ENCODE measurements at regions of chr9 and their contacts with region 1.

Region 1: GRCh38 chr9:77977210-77977611 is 54.4 kb downstream of the GNAQ start:
- DNase-seq: no peak
- ATAC-seq: peak; percentile 44
- H3K4me3 ChIP-seq: no peak overlapping the region
- H3K27ac ChIP-seq: no peak overlapping the region
- H3K4me1 ChIP-seq: no peaks in the 10 kb centered on the region
- H3K27me3 ChIP-seq: 0 out of 4 replicates have a peak, but pooled peaks cover 0 to 2% of the 10 kb centered on the region in 2 experiments
- CTCF ChIP-seq: peak; percentile 24 to 44 (median 35); a peak in 4 of 6 replicates
- EP300 ChIP-seq: no peak
- POLR2A ChIP-seq: no peak
- RAD21 ChIP-seq: peak; percentile 44

Region 2: GRCh38 chr9:77841739-77842386 is 135.3 kb before region 1 on chr9:
- CTCF ChIA-PET with region 1: interaction called, 29 read pairs
- POLR2A ChIA-PET with region 1: interaction called, 4 read pairs
- RAD21 ChIA-PET with region 1: interaction called, 12 read pairs
- SMC1A ChIA-PET with region 1: interaction called, 17 read pairs
- in situ Hi-C with region 1: no loop called
- intact Hi-C with region 1: no loop called
- DNase-seq: peak; percentile 16
- ATAC-seq: peak; percentile 95
- H3K4me3 ChIP-seq: no peak overlapping the region
- H3K27ac ChIP-seq: no peak overlapping the region
- H3K4me1 ChIP-seq: peaks cover 8% of the 10 kb centered on the region; the same call in 1 of the 2 replicates
- H3K27me3 ChIP-seq: no peaks in the 10 kb centered on the region
- CTCF ChIP-seq: peak; percentile 1 to 16 (median 8); a peak in 2 of 6 replicates
- EP300 ChIP-seq: no peak; a peak in 1 of 4 replicates
- POLR2A ChIP-seq: no peak
- RAD21 ChIP-seq: peak; percentile 48

Region 3: GRCh38 chr9:77926309-77926959 is 50.8 kb before region 1 on chr9:
- CTCF ChIA-PET with region 1: interaction called, 4 read pairs
- POLR2A ChIA-PET with region 1: no interaction called
- RAD21 ChIA-PET with region 1: interaction called, 3 read pairs
- SMC1A ChIA-PET with region 1: interaction called, 5 read pairs
- in situ Hi-C with region 1: no loop called
- intact Hi-C with region 1: loop called (anchors 10 kb)
- DNase-seq: no peak
- ATAC-seq: peak; percentile 31; the same call in 1 of the 3 replicates
- H3K4me3 ChIP-seq: no peak overlapping the region
- H3K27ac ChIP-seq: no peak overlapping the region
- H3K4me1 ChIP-seq: no peaks in the 10 kb centered on the region
- H3K27me3 ChIP-seq: no peaks in the 10 kb centered on the region
- CTCF ChIP-seq: no peak
- EP300 ChIP-seq: no peak
- POLR2A ChIP-seq: no peak
- RAD21 ChIP-seq: no peak

Region 4: GRCh38 chr9:77960356-77961153 is 16.7 kb before region 1 on chr9:
- CTCF ChIA-PET with region 1: interaction called, 10 read pairs
- POLR2A ChIA-PET with region 1: interaction called, 4 read pairs
- RAD21 ChIA-PET with region 1: interaction called, 13 read pairs
- SMC1A ChIA-PET with region 1: interaction called, 9 read pairs
- in situ Hi-C with region 1: no loop called
- intact Hi-C with region 1: no loop called
- DNase-seq: no peak
- ATAC-seq: peak; percentile 15
- H3K4me3 ChIP-seq: no peak overlapping the region
- H3K27ac ChIP-seq: no peak overlapping the region
- H3K4me1 ChIP-seq: no peaks in the 10 kb centered on the region
- H3K27me3 ChIP-seq: peaks cover 0 to 3% of the 10 kb centered on the region in 2 experiments; a peak in 1 of 4 replicates
- CTCF ChIP-seq: no peak
- EP300 ChIP-seq: no peak
- POLR2A ChIP-seq: no peak
- RAD21 ChIP-seq: no peak

Region 5: DNA sequence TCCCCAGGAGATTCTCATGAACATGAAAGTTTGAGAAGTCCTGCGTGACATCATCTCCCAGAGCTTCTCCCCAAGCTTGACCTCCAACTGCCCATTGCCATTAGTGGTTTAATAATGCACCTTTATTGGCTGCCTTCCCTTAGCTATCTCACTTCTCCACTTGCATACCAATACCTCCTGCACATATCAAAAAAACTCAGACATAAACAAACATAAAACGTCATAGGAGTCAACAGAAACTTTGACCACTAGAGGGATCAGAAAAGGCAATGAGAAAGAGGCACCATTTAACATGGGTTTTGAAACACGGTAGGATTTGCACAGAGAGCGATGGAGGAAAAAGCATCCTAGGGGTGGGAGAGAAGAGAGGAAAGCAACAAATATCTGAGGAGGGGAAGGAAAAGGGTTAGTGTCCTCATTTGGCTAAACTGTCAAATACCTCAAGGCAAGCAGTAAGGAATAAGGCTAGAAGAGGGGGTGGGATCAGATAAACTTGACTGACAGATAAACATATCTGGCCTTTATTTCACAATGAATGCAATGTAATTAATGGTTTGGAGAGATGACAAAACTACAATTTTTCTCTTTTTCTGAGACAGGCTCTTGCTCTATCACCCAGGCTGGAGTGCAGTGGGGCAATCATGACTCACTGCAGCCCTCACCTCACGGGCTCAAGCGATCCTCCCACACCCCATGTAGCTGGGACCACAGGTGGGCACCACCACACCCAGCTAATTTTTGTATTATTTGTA is 27.4 kb after region 1 on chr9:
- CTCF ChIA-PET with region 1: interaction called, 4 read pairs
- POLR2A ChIA-PET with region 1: no interaction called
- RAD21 ChIA-PET with region 1: interaction called, 8 read pairs
- SMC1A ChIA-PET with region 1: interaction called, 13 read pairs
- in situ Hi-C with region 1: no loop called
- intact Hi-C with region 1: no loop called
- DNase-seq: no peak
- ATAC-seq: peak; percentile 44
- H3K4me3 ChIP-seq: no peak overlapping the region
- H3K27ac ChIP-seq: no peak overlapping the region
- H3K4me1 ChIP-seq: no peaks in the 10 kb centered on the region
- H3K27me3 ChIP-seq: no peaks in the 10 kb centered on the region; a peak in 2 of 4 replicates
- CTCF ChIP-seq: peak; percentile 3 to 25 (median 6); a peak in 3 of 6 replicates
- EP300 ChIP-seq: no peak
- POLR2A ChIP-seq: no peak
- RAD21 ChIP-seq: no peak

Region 6: GRCh38 chr9:78035383-78035993 is 58.3 kb after region 1 on chr9:
- CTCF ChIA-PET with region 1: interaction called, 153 read pairs
- POLR2A ChIA-PET with region 1: interaction called, 11 read pairs
- RAD21 ChIA-PET with region 1: interaction called, 123 read pairs
- SMC1A ChIA-PET with region 1: interaction called, 145 read pairs
- in situ Hi-C with region 1: no loop called
- intact Hi-C with region 1: loop called (anchors 5 kb)
- DNase-seq: peak; percentile 7
- ATAC-seq: peak; percentile 51
- H3K4me3 ChIP-seq: no peak overlapping the region
- H3K27ac ChIP-seq: no peak overlapping the region
- H3K4me1 ChIP-seq: no peaks in the 10 kb centered on the region
- H3K27me3 ChIP-seq: peaks cover 4 to 15% of the 10 kb centered on the region in 2 experiments; a peak in 3 of 4 replicates
- CTCF ChIP-seq: peak; percentile 64 to 72 (median 71)
- EP300 ChIP-seq: no peak
- POLR2A ChIP-seq: no peak
- RAD21 ChIP-seq: peak; percentile 84

Region 7: DNA sequence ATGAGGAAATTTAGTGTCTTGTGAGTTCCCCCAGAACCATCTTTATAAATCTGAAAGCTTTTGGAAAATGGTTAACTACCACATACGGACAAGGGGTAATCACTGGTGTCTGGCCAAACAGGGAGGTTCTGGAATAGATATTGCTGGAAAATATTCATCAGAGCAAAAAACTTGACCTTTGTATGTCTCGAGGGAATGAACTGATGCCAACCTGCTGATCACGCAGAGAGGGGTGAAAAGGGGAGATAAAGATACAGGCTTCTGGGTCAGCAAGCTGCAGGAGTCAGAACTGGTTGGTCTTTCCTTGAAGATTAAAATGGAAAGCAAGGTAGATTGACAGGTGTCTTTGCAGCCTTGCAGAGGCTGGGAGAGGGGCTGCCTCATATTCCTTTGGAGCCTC is 355.2 kb after region 1 on chr9:
- CTCF ChIA-PET with region 1: no interaction called
- POLR2A ChIA-PET with region 1: no interaction called
- RAD21 ChIA-PET with region 1: no interaction called
- SMC1A ChIA-PET with region 1: no interaction called
- in situ Hi-C with region 1: no loop called
- intact Hi-C with region 1: no loop called
- DNase-seq: no peak
- ATAC-seq: no peak
- H3K4me3 ChIP-seq: no peak overlapping the region
- H3K27ac ChIP-seq: no peak overlapping the region
- H3K4me1 ChIP-seq: no peaks in the 10 kb centered on the region
- H3K27me3 ChIP-seq: no peaks in the 10 kb centered on the region
- CTCF ChIP-seq: no peak
- EP300 ChIP-seq: no peak
- POLR2A ChIP-seq: no peak
- RAD21 ChIP-seq: no peak

Measured in GM12878 (cell line).